Caco-2 (cell line): ENCODE measurements at regions of chr1 and their contacts with region 1.

Region 1: GRCh38 chr1:45569962-45570581 is 13.8 kb upstream of the NASP start:
- DNase-seq: peak; percentile 66 to 67
- H3K4me3 ChIP-seq: no peak overlapping the region
- H3K4me3 Mint-ChIP-seq: no peak overlapping the region
- H3K27ac Mint-ChIP-seq: no peak overlapping the region
- H3K4me1 ChIP-seq: no peaks in the 10 kb centered on the region
- H3K4me1 Mint-ChIP-seq: no peaks in the 10 kb centered on the region
- H3K27me3 ChIP-seq: no peaks in the 10 kb centered on the region
- H3K27me3 Mint-ChIP-seq: no peaks in the 10 kb centered on the region
- CTCF ChIP-seq: peak; percentile 83 to 91

Region 2: DNA sequence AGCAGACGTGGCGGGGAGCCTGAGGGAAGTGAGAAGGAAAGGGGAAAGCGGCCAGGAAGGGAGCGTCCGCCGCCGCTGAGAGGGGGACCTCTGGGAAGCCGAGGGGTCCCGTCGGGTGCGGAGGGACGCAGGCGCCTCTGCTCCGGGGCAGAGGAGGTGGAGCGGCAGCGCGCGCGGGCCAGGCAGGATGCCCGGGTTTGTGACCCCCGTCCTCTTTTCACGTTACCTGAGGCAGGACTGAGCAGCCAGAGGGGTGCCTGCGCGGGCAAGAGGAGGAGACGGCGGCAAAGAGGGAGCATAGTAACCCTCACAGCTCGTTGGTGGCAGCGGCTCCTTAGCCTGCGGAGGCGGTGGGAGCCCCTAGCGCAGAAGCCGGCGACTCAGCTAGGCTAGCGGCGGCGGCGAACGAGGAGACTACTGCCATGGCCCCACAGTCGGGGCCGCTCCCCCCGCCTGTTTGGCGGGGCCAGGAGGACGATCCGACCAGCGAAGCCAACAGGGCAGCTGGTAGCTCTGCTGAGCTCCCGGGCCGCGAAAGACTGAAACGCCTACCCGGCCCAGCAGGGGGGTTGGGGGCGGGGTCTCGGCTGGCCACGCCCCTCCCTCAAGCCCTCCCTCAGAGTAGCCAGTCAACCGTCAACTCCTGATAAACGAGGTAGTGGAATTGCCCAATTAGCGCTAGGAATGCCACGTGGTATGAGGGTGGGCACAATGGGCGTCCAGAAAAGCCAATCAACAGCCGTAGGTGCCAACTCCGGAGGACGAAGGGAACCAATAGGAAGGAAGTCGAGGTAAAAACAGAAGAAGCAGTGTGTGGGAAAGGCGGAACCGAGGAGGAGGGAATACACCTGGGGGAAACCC is 79.2 kb before region 1 on chr1 and contains the start of gene TESK2:
- CTCF ChIA-PET with region 1: no interaction called
- POLR2A ChIA-PET with region 1: no interaction called
- intact Hi-C with region 1: no loop called
- DNase-seq: peak; percentile 97 to 99
- H3K4me3 ChIP-seq: peak within 1 kb of the TSS; percentile 92
- H3K4me3 Mint-ChIP-seq: no peak within 1 kb of the TSS
- H3K27ac Mint-ChIP-seq: no peak within 1 kb of the TSS
- H3K4me1 ChIP-seq: no peaks in the 10 kb centered on the region
- H3K4me1 Mint-ChIP-seq: peaks cover 15% of the 10 kb centered on the region
- H3K27me3 ChIP-seq: no peaks in the 10 kb centered on the region
- H3K27me3 Mint-ChIP-seq: no peaks in the 10 kb centered on the region
- CTCF ChIP-seq: peak in 1 of 2 experiments; percentile 1
- total RNA-seq, gene TESK2: 11.9 and 14.7 TPM in 2 replicates

Region 3: GRCh38 chr1:45512641-45513054 is 57.4 kb before region 1 on chr1:
- CTCF ChIA-PET with region 1: interaction called, 14 read pairs
- POLR2A ChIA-PET with region 1: no interaction called
- intact Hi-C with region 1: loop called (anchors 1 kb)
- DNase-seq: peak; percentile 84
- H3K4me3 ChIP-seq: no peak overlapping the region
- H3K4me3 Mint-ChIP-seq: no peak overlapping the region
- H3K27ac Mint-ChIP-seq: peak overlapping the region; percentile 82
- H3K4me1 ChIP-seq: peaks cover 50% of the 10 kb centered on the region
- H3K4me1 Mint-ChIP-seq: peaks cover 32% of the 10 kb centered on the region
- H3K27me3 ChIP-seq: no peaks in the 10 kb centered on the region
- H3K27me3 Mint-ChIP-seq: no peaks in the 10 kb centered on the region
- CTCF ChIP-seq: peak; percentile 71 to 73

Region 4: DNA sequence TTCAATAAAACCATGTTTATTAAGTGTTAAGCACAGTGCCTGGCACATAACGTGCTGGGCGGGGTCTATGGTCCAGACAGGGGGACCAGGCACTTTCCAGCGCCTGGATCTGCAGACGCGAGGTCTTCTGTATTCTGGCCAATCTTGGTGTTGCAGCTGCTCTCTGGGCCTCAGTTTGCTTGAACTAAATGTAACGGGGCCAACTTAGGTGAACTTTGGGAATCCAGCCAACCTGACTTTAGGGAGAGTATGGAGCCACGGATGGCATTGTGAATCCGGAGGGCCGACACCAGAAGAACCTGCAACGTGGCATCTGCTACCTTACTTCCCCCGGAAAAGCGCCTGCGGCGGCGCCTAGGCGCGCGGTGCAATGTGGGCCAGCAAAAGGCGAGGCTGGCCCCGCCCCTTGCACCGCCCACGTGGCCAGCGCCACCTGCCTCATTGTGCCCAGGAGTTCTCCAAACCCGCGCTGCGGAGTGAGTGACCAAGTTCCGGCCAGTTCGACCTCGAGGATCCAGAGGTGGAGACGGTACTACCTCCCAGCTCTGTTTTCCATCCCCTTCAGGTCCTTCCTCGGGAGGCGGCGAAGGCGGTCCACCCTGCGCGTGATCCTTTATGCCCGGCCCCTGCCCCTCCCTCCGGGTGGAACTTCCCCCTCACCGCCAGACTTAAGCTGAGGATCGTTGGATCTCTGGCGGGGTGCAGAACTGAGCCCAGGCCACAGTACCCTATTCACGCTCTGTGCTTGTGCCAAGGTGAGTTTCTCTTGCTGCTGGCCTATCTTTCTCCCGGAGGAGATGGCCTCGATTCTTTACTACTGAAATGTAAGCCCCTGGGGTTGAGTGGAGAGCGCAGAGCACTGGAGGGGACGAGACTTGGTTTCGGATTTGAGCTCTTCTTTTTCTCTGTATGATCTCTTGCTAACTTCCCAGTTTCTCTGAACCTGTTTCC is 19.4 kb before region 1 on chr1 and contains the start of gene AKR1A1:
- CTCF ChIA-PET with region 1: interaction called, 12 read pairs
- POLR2A ChIA-PET with region 1: interaction called, 4 read pairs
- intact Hi-C with region 1: loop called (anchors 1 kb)
- DNase-seq: peak; percentile 91 to 93
- H3K4me3 ChIP-seq: peak within 1 kb of the TSS; percentile 81
- H3K4me3 Mint-ChIP-seq: peak within 1 kb of the TSS; percentile 95
- H3K27ac Mint-ChIP-seq: peak within 1 kb of the TSS; percentile 90
- H3K4me1 ChIP-seq: 0 out of 2 replicates have a peak, but pooled peaks cover 4% of the 10 kb centered on the region
- H3K4me1 Mint-ChIP-seq: peaks cover 7% of the 10 kb centered on the region
- H3K27me3 ChIP-seq: no peaks in the 10 kb centered on the region
- H3K27me3 Mint-ChIP-seq: no peaks in the 10 kb centered on the region
- CTCF ChIP-seq: peak in 1 of 2 experiments; percentile 3
- total RNA-seq, gene AKR1A1: 119 and 129 TPM in 2 replicates

Region 5: GRCh38 chr1:45589861-45590260 is 19.8 kb after region 1 on chr1:
- CTCF ChIA-PET with region 1: no interaction called
- POLR2A ChIA-PET with region 1: no interaction called
- intact Hi-C with region 1: no loop called
- DNase-seq: no peak
- H3K4me3 ChIP-seq: no peak overlapping the region
- H3K4me3 Mint-ChIP-seq: no peak overlapping the region
- H3K27ac Mint-ChIP-seq: no peak overlapping the region
- H3K4me1 ChIP-seq: 0 out of 2 replicates have a peak, but pooled peaks cover 4% of the 10 kb centered on the region
- H3K4me1 Mint-ChIP-seq: no peaks in the 10 kb centered on the region
- H3K27me3 ChIP-seq: no peaks in the 10 kb centered on the region
- H3K27me3 Mint-ChIP-seq: no peaks in the 10 kb centered on the region
- CTCF ChIP-seq: no peak